MCF 10A (cell line): ENCODE measurements at regions of chr7 and their contacts with region 1.

Region 1: DNA sequence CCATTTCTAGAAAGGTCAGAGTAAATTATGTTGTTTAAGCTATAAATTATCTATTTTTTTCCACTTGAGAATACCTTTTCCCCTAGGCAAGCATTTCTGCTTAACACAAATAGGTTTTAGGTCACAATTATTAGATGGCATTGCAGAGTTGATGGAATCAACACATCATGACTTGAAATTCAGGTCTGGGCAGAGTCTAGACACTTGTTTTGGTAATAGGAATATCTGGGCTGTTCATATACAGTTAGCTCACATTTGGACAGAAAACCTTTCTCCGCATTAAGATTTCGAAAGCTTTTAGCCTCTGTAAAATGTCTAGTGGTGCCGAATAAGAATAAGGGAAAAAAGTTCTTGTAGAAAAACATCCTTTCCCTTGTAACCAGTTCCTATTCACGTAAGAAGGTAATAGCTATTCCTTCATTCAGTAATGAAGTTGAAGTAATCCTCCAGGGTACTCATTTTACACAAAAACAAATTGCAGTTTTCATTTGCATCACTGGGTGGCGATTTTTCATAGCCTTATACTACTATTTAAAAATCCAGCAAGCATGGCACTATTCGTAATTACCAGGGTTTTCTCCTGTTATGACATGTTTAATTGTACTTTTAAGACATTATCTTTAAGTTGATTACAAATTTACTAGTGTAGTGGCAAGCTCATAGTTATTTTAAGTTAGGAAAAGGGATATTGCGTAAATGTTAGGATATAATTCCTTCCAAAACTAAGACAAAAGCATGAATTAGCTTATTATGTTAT is 37.0 kb downstream of the RPA3 start:
- DNase-seq: peak; percentile 77
- H3K4me3 Mint-ChIP-seq: no peak overlapping the region
- H3K27ac Mint-ChIP-seq: peak overlapping the region; percentile 75
- H3K4me1 Mint-ChIP-seq: peaks cover 15% of the 10 kb centered on the region
- H3K27me3 Mint-ChIP-seq: no peaks in the 10 kb centered on the region
- CTCF ChIP-seq: peak; percentile 47

Region 2: GRCh38 chr7:7640221-7641128 is 40.9 kb before region 1 on chr7 and contains the start of gene UMAD1:
- CTCF ChIA-PET with region 1: interaction called, 10 read pairs
- POLR2A ChIA-PET with region 1: interaction called, 39 read pairs
- intact Hi-C with region 1: no loop called
- DNase-seq: peak; percentile 99
- H3K4me3 Mint-ChIP-seq: peak within 1 kb of the TSS; percentile 96
- H3K27ac Mint-ChIP-seq: peak within 1 kb of the TSS; percentile 97
- H3K4me1 Mint-ChIP-seq: peaks cover 21% of the 10 kb centered on the region
- H3K27me3 Mint-ChIP-seq: no peaks in the 10 kb centered on the region
- CTCF ChIP-seq: no peak
- total RNA-seq, gene UMAD1: 7.1 and 11.1 TPM in 2 replicates

Region 3: GRCh38 chr7:7713730-7714129 is 32.4 kb after region 1 on chr7:
- CTCF ChIA-PET with region 1: interaction called, 8 read pairs
- POLR2A ChIA-PET with region 1: interaction called, 24 read pairs
- intact Hi-C with region 1: no loop called
- DNase-seq: no peak
- H3K4me3 Mint-ChIP-seq: no peak overlapping the region
- H3K27ac Mint-ChIP-seq: no peak overlapping the region
- H3K4me1 Mint-ChIP-seq: peaks cover 9% of the 10 kb centered on the region
- H3K27me3 Mint-ChIP-seq: no peaks in the 10 kb centered on the region
- CTCF ChIP-seq: no peak

Region 4: GRCh38 chr7:7761340-7761980 is 80.1 kb after region 1 on chr7:
- CTCF ChIA-PET with region 1: interaction called, 90 read pairs
- POLR2A ChIA-PET with region 1: interaction called, 60 read pairs
- intact Hi-C with region 1: loop called (anchors 1 kb)
- DNase-seq: peak; percentile 64
- H3K4me3 Mint-ChIP-seq: peak overlapping the region; percentile 87
- H3K27ac Mint-ChIP-seq: peak overlapping the region; percentile 95
- H3K4me1 Mint-ChIP-seq: peaks cover 33% of the 10 kb centered on the region
- H3K27me3 Mint-ChIP-seq: no peaks in the 10 kb centered on the region
- CTCF ChIP-seq: peak; percentile 30

Region 5: DNA sequence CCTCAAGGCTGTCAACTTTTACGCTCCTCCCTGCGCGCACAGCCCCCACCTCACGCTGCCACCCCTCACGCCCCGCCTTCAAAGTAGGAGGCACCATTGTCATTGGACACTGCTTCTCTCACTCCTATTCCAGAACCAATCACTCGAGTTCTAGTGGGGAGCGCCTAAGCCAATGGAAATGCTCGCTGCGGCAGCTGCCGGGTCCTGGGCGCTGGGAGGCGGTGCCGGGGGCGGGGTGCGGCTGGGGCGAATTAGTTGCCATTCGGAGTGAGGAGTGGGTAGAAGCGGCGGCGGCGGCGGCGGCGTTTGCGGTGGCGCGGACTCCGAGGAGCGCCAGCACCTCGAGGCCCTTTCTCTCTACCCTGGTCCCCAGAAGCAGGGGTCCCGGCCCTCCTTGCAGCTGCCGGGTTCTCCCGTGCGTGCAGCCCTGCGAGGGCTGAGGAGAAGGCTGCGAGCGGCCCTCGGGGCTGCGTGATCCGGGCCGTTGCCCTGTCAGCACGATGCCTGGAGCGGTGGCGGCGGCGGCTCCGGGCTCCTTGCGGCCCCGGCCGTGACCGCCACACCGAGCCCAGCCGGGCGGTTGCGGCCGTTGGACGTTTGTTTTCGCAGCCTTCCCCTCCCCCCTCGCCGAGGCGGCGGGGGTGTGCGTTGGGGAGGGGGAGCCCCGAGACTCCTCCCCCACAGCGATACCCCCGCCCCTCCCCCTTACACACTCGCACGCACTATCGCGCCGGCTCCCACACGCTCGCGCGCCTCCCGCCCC is 287.4 kb after region 1 on chr7 and contains the start of gene GLCCI1:
- CTCF ChIA-PET with region 1: interaction called, 17 read pairs
- POLR2A ChIA-PET with region 1: interaction called, 17 read pairs
- intact Hi-C with region 1: no loop called
- DNase-seq: peak; percentile 98
- H3K4me3 Mint-ChIP-seq: no peak within 1 kb of the TSS
- H3K27ac Mint-ChIP-seq: peak within 1 kb of the TSS; percentile 11
- H3K4me1 Mint-ChIP-seq: peaks cover 5% of the 10 kb centered on the region
- H3K27me3 Mint-ChIP-seq: no peaks in the 10 kb centered on the region
- CTCF ChIP-seq: no peak
- total RNA-seq, gene GLCCI1: 5.3 and 7.4 TPM in 2 replicates

Region 6: GRCh38 chr7:8005276-8006094 is 324.1 kb after region 1 on chr7:
- CTCF ChIA-PET with region 1: no interaction called
- POLR2A ChIA-PET with region 1: no interaction called
- intact Hi-C with region 1: no loop called
- DNase-seq: no peak
- H3K4me3 Mint-ChIP-seq: no peak overlapping the region
- H3K27ac Mint-ChIP-seq: no peak overlapping the region
- H3K4me1 Mint-ChIP-seq: no peaks in the 10 kb centered on the region
- H3K27me3 Mint-ChIP-seq: no peaks in the 10 kb centered on the region
- CTCF ChIP-seq: no peak

Region 7: GRCh38 chr7:8217200-8218068 is 536.1 kb after region 1 on chr7:
- CTCF ChIA-PET with region 1: interaction called, 10 read pairs
- POLR2A ChIA-PET with region 1: no interaction called
- intact Hi-C with region 1: loop called (anchors 1 kb)
- DNase-seq: peak; percentile 64
- H3K4me3 Mint-ChIP-seq: no peak overlapping the region
- H3K27ac Mint-ChIP-seq: no peak overlapping the region
- H3K4me1 Mint-ChIP-seq: peaks cover 5% of the 10 kb centered on the region
- H3K27me3 Mint-ChIP-seq: no peaks in the 10 kb centered on the region
- CTCF ChIP-seq: peak; percentile 65